CD4-positive, alpha-beta T cell (primary cell): ENCODE measurements at regions of chr18 and their contacts with region 1.

Region 1: GRCh38 chr18:35132021-35132902 is 91.0 kb downstream of the MAPRE2 start:
- DNase-seq: peak in 1 of 14 experiments; percentile 25
- ATAC-seq: no peak
- H3K4me3 ChIP-seq: no peak overlapping the region
- H3K4me3 Mint-ChIP-seq: no peak overlapping the region
- H3K27ac ChIP-seq: no peak overlapping the region
- H3K27ac Mint-ChIP-seq: peak overlapping the region; percentile 55
- H3K4me1 ChIP-seq: no peaks in the 10 kb centered on the region
- H3K4me1 Mint-ChIP-seq: no peaks in the 10 kb centered on the region
- H3K27me3 ChIP-seq: no peaks in the 10 kb centered on the region
- H3K27me3 Mint-ChIP-seq: no peaks in the 10 kb centered on the region
- CTCF ChIP-seq: no peak

Region 2: GRCh38 chr18:34867520-34867919 is 264.7 kb before region 1 on chr18:
- CTCF ChIA-PET with region 1: no interaction called
- POLR2A ChIA-PET with region 1: no interaction called
- intact Hi-C with region 1: loop called in 1 of 2 experiments (anchors 5 kb)
- DNase-seq: no peak
- ATAC-seq: no peak
- H3K4me3 ChIP-seq: no peak overlapping the region
- H3K4me3 Mint-ChIP-seq: no peak overlapping the region
- H3K27ac ChIP-seq: no peak overlapping the region
- H3K27ac Mint-ChIP-seq: no peak overlapping the region
- H3K4me1 ChIP-seq: no peaks in the 10 kb centered on the region
- H3K4me1 Mint-ChIP-seq: peaks cover 16% of the 10 kb centered on the region
- H3K27me3 ChIP-seq: no peaks in the 10 kb centered on the region
- H3K27me3 Mint-ChIP-seq: no peaks in the 10 kb centered on the region
- CTCF ChIP-seq: no peak

Region 3: GRCh38 chr18:35085450-35086380 is 46.5 kb before region 1 on chr18:
- CTCF ChIA-PET with region 1: interaction called, 3 read pairs
- POLR2A ChIA-PET with region 1: no interaction called
- intact Hi-C with region 1: loop called in 1 of 2 experiments (anchors 5 kb)
- DNase-seq: no peak
- ATAC-seq: no peak
- H3K4me3 ChIP-seq: no peak overlapping the region
- H3K4me3 Mint-ChIP-seq: no peak overlapping the region
- H3K27ac ChIP-seq: no peak overlapping the region
- H3K27ac Mint-ChIP-seq: no peak overlapping the region
- H3K4me1 ChIP-seq: no peaks in the 10 kb centered on the region
- H3K4me1 Mint-ChIP-seq: peaks cover 65% of the 10 kb centered on the region
- H3K27me3 ChIP-seq: no peaks in the 10 kb centered on the region
- H3K27me3 Mint-ChIP-seq: no peaks in the 10 kb centered on the region
- CTCF ChIP-seq: no peak